GM23248 (cell line): ENCODE measurements at regions of chr6 and their contacts with region 1.

Region 1: GRCh38 chr6:16514249-16514648 is 247.0 kb downstream of the ATXN1 start:
- DNase-seq: peak; percentile 68
- H3K4me3 ChIP-seq: no peak overlapping the region
- H3K27ac ChIP-seq: no peak overlapping the region
- H3K4me1 ChIP-seq: 0 out of 2 replicates have a peak, but pooled peaks cover 3% of the 10 kb centered on the region
- H3K27me3 ChIP-seq: no peaks in the 10 kb centered on the region

Region 2: DNA sequence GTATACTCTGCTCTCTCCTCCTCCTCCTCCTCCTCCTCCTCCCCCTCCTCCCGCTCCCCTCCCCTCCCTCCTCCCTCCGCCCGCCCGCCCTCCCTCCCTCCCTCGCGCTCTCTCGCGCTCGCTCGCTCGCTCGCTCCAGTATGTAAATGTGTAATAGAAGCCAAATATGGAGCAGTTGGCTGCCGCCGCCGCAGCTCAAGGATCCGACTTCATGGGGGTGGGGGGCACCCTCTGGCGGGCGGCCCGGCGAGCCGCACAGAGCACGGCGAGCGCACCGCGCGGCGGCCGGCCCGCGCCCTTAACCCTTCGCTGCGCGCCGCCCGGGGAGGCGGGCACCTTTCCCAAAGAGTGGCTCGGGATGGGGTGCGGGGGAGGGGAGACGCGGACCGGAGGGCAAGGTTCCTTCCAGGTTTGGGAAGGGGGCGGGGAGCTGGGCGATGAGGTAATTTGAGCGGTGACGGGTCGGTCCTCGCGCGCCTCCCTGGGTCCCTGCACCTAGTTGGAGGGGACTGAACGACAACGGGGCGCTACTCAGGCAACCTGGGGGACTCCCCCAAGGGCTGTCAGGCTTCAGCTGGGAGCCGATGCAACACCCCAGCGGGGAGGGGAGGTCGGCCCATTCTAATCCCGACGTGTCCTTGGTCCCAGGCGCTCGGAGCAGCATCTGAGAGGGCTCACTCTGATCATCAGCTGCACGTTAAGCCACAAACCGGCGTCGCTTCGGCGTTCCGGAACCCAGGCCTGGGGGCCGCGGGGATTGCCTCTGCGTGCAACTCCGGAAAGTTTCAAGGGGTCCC is 247.4 kb after region 1 on chr6:
- in situ Hi-C with region 1: loop called (anchors 10 kb)
- DNase-seq: peak; percentile 95
- H3K4me3 ChIP-seq: peak overlapping the region; percentile 95
- H3K27ac ChIP-seq: peak overlapping the region; percentile 96
- H3K4me1 ChIP-seq: peaks cover 49% of the 10 kb centered on the region
- H3K27me3 ChIP-seq: no peaks in the 10 kb centered on the region

Region 3: DNA sequence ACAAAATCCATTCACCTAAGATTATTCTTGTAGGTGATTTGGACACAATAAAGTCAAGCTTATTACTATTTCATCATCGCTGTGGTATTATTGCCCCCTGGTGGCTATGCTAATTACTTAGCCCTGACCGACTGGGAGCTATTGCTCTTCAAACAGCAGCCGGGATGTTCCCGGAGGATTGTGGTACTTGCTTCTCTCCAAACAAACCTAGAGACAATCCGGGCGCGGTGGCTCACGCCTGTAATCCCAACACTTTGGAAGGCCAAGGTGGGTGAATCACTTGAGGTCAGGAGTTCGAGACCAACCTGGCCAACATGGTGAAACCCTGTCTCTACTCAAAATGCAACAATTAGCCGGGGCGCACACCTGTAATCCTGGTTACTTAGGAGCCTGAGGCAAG is 572.2 kb after region 1 on chr6:
- in situ Hi-C with region 1: loop called (anchors 25 kb)
- DNase-seq: peak; percentile 81
- H3K4me3 ChIP-seq: no peak overlapping the region
- H3K27ac ChIP-seq: no peak overlapping the region
- H3K4me1 ChIP-seq: peaks cover 6% of the 10 kb centered on the region
- H3K27me3 ChIP-seq: no peaks in the 10 kb centered on the region